Activated CD8-positive, alpha-beta T cell treated with anti-CD3 and anti-CD28 coated beads, Interleukin-2, amount 10 ng/mL, durations not matched to agents 7 days and 5 days (primary cell): ENCODE measurements at regions of chr2 and their contacts with region 1.

Region 1: GRCh38 chr2:69565431-69565839 is 78.1 kb downstream of the AAK1 start:
- DNase-seq: peak; percentile 80
- ATAC-seq: peak; percentile 89
- H3K4me3 Mint-ChIP-seq: no peak overlapping the region
- H3K27ac Mint-ChIP-seq: peak overlapping the region; percentile 6
- H3K4me1 Mint-ChIP-seq: peaks cover 55% of the 10 kb centered on the region
- H3K27me3 Mint-ChIP-seq: no peaks in the 10 kb centered on the region

Region 2: GRCh38 chr2:69177785-69178636 is 387.4 kb before region 1 on chr2:
- CTCF ChIA-PET with region 1: no interaction called
- POLR2A ChIA-PET with region 1: no interaction called
- DNase-seq: no peak
- ATAC-seq: no peak
- H3K4me3 Mint-ChIP-seq: no peak overlapping the region
- H3K27ac Mint-ChIP-seq: no peak overlapping the region
- H3K4me1 Mint-ChIP-seq: peaks cover 4% of the 10 kb centered on the region
- H3K27me3 Mint-ChIP-seq: peaks cover 14% of the 10 kb centered on the region

Region 3: GRCh38 chr2:69525261-69525660 is 40.2 kb before region 1 on chr2:
- CTCF ChIA-PET with region 1: interaction called, 14 read pairs
- POLR2A ChIA-PET with region 1: no interaction called
- DNase-seq: no peak
- ATAC-seq: no peak
- H3K4me3 Mint-ChIP-seq: no peak overlapping the region
- H3K27ac Mint-ChIP-seq: no peak overlapping the region
- H3K4me1 Mint-ChIP-seq: no peaks in the 10 kb centered on the region
- H3K27me3 Mint-ChIP-seq: no peaks in the 10 kb centered on the region

Region 4: DNA sequence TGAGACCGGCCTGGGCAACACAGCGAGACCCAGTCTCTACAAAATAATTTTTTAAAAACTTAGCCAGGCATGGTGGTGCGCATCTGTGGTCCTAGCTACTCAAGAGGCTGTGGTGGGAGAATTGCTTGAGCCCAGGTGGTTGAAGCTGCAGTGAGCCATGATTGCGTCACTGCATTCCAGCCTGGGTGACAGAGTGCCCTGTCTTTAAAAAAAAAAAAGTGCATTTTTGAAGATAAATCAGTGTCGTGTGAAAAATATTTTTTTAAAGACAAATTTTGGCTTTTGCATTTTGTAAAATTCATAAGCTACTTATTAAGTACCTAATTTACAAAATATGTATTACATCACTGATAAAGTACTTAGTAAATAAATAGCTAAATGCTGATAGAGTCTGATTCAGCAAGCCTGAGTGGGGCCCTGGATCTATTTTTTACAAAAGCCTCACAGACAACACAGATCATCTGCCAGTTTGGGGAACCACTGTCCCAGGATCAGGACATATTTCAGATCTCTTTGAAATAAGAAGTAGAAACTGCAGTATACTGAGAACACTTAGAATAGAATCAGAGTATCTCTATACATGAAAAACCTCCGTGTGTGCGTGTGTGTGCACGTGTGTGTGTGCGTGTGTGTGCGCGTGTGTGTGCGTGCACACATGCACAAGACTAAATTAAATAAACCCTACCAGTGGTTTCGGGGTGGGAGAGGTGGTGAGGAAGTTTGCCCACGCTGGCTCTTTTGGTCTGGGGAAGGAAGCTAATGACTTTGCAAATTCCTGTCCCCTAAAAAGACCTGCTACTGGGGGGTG is 16.5 kb after region 1 on chr2:
- CTCF ChIA-PET with region 1: interaction called, 219 read pairs
- POLR2A ChIA-PET with region 1: interaction called, 3 read pairs
- DNase-seq: peak; percentile 50
- ATAC-seq: peak; percentile 34
- H3K4me3 Mint-ChIP-seq: peak overlapping the region; percentile 59
- H3K27ac Mint-ChIP-seq: peak overlapping the region; percentile 53
- H3K4me1 Mint-ChIP-seq: peaks cover 86% of the 10 kb centered on the region
- H3K27me3 Mint-ChIP-seq: no peaks in the 10 kb centered on the region

Region 5: DNA sequence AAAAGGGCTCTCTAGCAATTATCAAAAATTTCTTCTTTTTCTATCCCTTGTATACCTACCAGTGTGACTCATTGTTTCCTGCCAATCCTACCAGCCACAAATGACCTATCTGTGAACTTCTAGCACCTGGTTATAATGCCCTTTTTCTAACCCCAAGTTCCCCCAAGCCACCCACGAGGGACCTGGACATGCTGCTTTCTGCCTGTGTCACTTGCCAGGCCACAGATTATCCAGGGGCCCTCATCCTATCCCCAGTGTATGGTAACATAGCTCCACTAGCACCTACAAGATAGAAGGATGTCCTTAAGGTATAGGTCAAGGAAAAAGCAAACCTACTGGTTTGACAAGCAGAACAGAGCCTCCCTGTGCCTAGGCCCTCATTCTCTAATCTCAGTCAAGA is 51.3 kb after region 1 on chr2:
- CTCF ChIA-PET with region 1: interaction called, 14 read pairs
- POLR2A ChIA-PET with region 1: no interaction called
- DNase-seq: peak; percentile 63
- ATAC-seq: peak; percentile 53
- H3K4me3 Mint-ChIP-seq: no peak overlapping the region
- H3K27ac Mint-ChIP-seq: peak overlapping the region; percentile 5
- H3K4me1 Mint-ChIP-seq: peaks cover 32% of the 10 kb centered on the region
- H3K27me3 Mint-ChIP-seq: no peaks in the 10 kb centered on the region

Region 6: DNA sequence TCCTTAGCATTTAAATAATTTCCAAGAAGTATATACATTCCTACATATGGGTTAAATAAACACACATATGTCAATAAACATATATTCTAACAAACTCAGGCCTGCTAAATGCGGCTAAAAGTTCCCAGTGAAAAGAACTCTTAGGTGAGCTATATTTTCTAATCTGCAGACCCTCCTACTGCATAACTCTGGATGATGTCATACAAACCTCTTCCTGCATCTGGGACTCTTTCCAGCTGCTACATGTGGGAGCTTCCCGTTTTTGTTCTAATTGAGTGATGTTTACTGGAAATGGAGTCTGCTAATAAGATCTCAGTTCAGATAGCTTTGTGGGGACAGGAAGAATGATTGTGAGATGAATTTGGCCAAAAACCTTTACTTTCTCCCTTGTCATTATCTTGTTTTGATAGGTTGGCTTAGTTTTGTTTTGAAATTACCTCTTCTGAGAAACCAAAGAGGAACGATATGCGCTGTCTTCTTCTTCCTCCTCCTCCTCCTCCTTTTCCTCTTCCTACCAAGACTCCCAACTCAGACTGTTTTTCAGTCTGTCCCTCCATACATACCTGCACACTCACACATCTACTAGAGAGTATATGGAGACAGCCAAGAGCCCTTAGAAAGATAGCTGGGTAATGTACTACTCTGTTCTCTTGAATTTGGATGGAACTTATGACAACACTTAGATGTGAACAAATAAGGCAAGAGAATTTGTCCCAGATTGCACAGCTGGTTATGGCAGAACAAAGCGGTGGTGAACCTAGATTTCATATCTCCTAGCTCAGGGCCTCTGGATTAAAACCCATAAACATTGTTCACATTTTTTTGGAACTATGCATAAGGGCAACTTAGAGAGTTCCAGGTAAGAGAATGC is 117.9 kb after region 1 on chr2:
- CTCF ChIA-PET with region 1: interaction called, 21 read pairs
- POLR2A ChIA-PET with region 1: no interaction called
- DNase-seq: no peak
- ATAC-seq: peak; percentile 35
- H3K4me3 Mint-ChIP-seq: peak overlapping the region; percentile 26
- H3K27ac Mint-ChIP-seq: peak overlapping the region; percentile 68
- H3K4me1 Mint-ChIP-seq: peaks cover 51% of the 10 kb centered on the region
- H3K27me3 Mint-ChIP-seq: no peaks in the 10 kb centered on the region

Region 7: DNA sequence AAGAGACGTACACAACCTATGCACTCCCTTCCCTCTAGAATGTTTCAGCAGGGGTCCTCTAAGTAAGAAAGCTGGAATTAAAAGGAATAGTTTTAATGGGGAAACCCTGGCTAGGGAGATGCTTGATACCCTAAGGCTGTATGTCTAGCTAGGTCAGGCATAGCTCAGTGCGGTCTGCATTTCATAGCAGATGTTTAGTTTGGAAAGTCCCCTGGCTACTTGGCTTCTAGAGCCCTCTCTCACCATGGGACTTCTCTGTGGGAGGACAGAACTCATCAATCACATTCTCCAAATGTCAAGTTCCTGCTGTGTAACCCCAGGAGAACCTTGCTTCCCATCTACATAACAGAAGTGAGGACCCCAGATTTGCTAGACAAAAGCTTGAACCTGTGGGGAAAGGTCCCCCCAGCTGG is 152.4 kb after region 1 on chr2:
- CTCF ChIA-PET with region 1: interaction called, 90 read pairs
- POLR2A ChIA-PET with region 1: no interaction called
- DNase-seq: no peak
- ATAC-seq: no peak
- H3K4me3 Mint-ChIP-seq: no peak overlapping the region
- H3K27ac Mint-ChIP-seq: no peak overlapping the region
- H3K4me1 Mint-ChIP-seq: peaks cover 7% of the 10 kb centered on the region
- H3K27me3 Mint-ChIP-seq: peaks cover 2% of the 10 kb centered on the region